ENCODE measurements at regions of chrX and their contacts with region 1.

Region 1: GRCh38 chrX:47523297-47523696 is 37.7 kb upstream of the ARAF start:
- DNase-seq: peak; percentile 17
- ATAC-seq: peak; percentile 98
- H3K4me3 ChIP-seq: peak overlapping the region; percentile 34 to 69 (median 51); a peak in 4 of 6 replicates
- H3K27ac ChIP-seq: no peak overlapping the region
- H3K4me1 ChIP-seq: no peaks in the 10 kb centered on the region
- H3K27me3 ChIP-seq: peaks cover 0 to 5% of the 10 kb centered on the region in 2 experiments; a peak in 1 of 5 replicates
- CTCF ChIP-seq: peak; percentile 91
- EP300 ChIP-seq: no peak
- POLR2A ChIP-seq: no peak
- RAD21 ChIP-seq: peak; percentile 90

Region 2: GRCh38 chrX:47497273-47497672 is 26.0 kb before region 1 on chrX:
- CTCF ChIA-PET with region 1: interaction called, 7 read pairs
- POLR2A ChIA-PET with region 1: no interaction called
- in situ Hi-C with region 1: no loop called
- intact Hi-C with region 1: loop called (anchors 2 kb)
- DNase-seq: no peak
- ATAC-seq: no peak
- H3K4me3 ChIP-seq: no peak overlapping the region
- H3K27ac ChIP-seq: no peak overlapping the region
- H3K4me1 ChIP-seq: no peaks in the 10 kb centered on the region
- H3K27me3 ChIP-seq: no peaks in the 10 kb centered on the region
- CTCF ChIP-seq: peak; percentile 35; the same call in 1 of the 2 replicates
- EP300 ChIP-seq: no peak
- POLR2A ChIP-seq: no peak
- RAD21 ChIP-seq: no peak

Region 3: DNA sequence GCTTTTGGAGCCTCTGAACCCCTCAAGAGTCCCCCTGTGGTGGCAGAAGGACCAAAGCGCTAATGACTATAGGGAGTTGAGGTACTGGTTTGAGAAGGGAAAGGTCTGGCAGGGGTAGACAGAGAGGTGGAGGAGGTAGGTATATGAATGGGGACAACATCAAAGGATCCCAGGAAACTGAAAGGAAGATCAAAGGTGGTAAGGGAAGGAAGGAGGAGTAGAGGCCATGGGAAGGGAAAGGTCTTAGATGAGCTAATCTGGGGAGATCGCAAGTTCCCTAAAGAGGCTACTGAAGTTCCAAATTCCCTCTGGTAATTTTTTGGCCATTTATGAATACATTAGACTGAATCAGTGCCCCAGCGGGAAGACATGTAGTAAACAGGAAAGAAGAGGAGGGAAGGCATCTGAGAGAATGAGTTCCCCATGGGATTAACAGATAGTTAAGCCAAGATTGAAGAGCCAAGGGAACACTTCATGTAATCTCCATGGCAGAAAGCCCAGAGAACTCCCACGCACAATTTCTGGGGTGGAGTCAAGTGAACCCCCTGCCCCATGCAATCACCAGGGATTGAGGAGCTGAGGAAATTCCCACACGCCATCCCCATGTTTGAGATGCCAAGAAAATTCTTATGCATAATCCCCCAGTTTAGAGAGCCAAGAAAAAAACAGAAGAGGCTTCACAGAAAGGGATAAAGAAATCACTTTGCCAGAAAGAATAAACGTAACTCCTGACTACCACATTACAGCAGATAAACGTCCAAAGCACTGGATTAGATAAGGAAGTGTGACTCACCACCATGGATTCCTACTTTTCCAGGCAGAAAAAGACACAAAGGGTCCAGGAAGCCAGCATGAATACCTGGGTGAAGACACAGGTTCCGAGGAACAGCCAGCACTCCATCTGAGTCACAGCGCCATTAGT is 522.4 kb after region 1 on chrX:
- CTCF ChIA-PET with region 1: no interaction called
- POLR2A ChIA-PET with region 1: no interaction called
- in situ Hi-C with region 1: no loop called
- intact Hi-C with region 1: no loop called
- DNase-seq: peak; percentile 7
- ATAC-seq: no peak
- H3K4me3 ChIP-seq: no peak overlapping the region
- H3K27ac ChIP-seq: no peak overlapping the region
- H3K4me1 ChIP-seq: no peaks in the 10 kb centered on the region
- H3K27me3 ChIP-seq: no peaks in the 10 kb centered on the region; a peak in 1 of 5 replicates
- CTCF ChIP-seq: no peak
- EP300 ChIP-seq: no peak
- POLR2A ChIP-seq: no peak
- RAD21 ChIP-seq: no peak